Naive thymus-derived CD4-positive, alpha-beta T cell (primary cell): ENCODE measurements at regions of chr19 and their contacts with region 1.

Region 1: DNA sequence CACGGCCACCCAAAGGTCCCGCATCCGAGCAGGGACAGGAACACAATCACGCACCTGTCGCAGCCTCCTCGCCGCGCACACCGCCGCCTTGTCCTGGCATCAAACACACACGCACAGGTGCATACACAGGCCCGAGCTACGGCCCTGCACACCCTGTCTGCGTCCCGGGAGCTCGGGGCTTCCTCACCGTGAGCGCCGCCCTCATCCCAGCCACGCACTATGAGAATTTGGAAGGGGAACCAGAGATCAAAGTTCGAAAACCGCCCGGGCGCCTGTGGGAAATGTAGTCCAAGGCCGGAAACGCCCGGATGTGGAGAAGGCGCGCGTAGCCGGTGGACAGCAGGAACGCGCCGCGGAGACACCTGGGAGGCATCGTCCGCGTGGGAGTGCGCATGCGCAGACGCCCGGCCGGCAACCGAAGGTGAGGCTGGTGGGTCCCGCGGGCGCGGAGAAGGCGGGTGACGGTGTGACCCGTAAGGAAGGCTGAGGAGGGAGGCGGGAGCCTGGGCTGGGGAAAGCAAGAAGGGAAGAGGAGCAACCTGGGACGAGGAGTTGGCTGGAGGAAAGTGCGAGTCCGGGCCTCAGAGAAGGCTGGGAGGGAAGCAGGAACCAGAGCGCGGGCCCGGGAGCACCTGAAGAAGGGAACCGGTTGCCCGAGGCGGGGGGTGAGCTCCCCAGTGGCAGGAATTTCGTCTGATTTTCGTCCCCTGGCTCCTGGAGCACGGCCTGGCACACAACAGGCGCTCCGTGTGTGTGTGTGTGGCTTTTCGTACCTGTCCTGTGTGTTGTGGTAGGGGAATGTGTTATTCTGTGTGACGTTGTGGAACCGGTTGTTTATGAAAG is at the start of gene ZNF567:
- DNase-seq: peak; percentile 90 to 99 (median 93)
- ATAC-seq: peak; percentile 97
- H3K4me3 ChIP-seq: peak within 1 kb of the TSS; percentile 85
- H3K4me3 Mint-ChIP-seq: peak within 1 kb of the TSS; percentile 94 to 100 (median 98)
- H3K27ac ChIP-seq: peak within 1 kb of the TSS; percentile 86
- H3K27ac Mint-ChIP-seq: peak within 1 kb of the TSS; percentile 92 to 97 (median 95)
- H3K4me1 ChIP-seq: peaks cover 13 to 22% of the 10 kb centered on the region in 2 donors
- H3K4me1 Mint-ChIP-seq: peaks cover 26 to 49% (median 40%) of the 10 kb centered on the region in 7 donors
- H3K27me3 ChIP-seq: no peaks in the 10 kb centered on the region
- H3K27me3 Mint-ChIP-seq: peaks cover 0 to 5% (median 0%) of the 10 kb centered on the region in 5 donors
- total RNA-seq, gene ZNF567: 7.0 to 18.3 (median 9.3) TPM

Region 2: DNA sequence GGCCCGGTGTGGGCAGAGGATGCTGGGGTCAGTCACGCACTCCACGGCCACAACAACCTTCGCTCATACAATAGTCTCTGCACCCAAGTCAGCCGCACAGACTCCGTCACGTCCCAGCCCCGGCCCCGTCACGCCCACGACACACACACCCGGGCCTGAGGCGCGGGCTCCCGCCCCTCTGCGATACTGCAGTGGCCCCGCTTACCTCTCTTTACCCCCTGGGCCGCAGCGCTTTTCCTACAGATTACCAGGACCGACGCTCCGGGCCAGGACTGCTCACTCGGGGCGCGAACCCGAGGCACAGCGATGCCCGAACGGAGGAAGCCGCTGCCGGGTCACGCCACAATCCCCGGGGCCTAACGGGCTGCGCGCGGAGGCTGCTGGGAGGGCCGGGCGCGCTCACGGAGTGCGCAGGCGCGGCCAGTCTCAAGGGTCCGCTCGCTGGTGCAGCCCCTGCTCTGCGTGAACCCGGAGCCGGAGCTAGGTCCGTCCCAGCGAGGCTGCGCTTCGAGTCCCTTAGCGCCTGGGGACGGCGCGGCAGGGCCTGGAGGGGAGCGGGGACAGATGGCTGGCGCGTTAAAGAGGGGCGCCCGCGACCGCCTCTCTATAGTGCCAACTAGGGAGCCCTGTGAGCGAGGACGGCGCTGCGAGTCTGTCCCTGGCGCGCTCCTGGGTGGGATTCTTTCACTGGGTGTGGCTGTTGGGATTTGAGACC is 269.0 kb before region 1 on chr19 and contains the start of gene ZFP82:
- CTCF ChIA-PET with region 1: no interaction called
- POLR2A ChIA-PET with region 1: no interaction called
- intact Hi-C with region 1: loop called in 1 of 2 experiments (anchors 1 kb)
- DNase-seq: peak; percentile 47 to 83 (median 76)
- ATAC-seq: peak; percentile 94
- H3K4me3 ChIP-seq: peak within 1 kb of the TSS; percentile 82
- H3K4me3 Mint-ChIP-seq: peak within 1 kb of the TSS; percentile 89 to 96 (median 93)
- H3K27ac ChIP-seq: peak within 1 kb of the TSS; percentile 83
- H3K27ac Mint-ChIP-seq: peak within 1 kb of the TSS; percentile 82 to 95 (median 91)
- H3K4me1 ChIP-seq: peaks cover 6 to 13% of the 10 kb centered on the region in 2 donors
- H3K4me1 Mint-ChIP-seq: peaks cover 10 to 36% (median 21%) of the 10 kb centered on the region in 7 donors
- H3K27me3 ChIP-seq: peaks cover 0 to 9% of the 10 kb centered on the region in 2 donors
- H3K27me3 Mint-ChIP-seq: peaks cover 14 to 23% (median 22%) of the 10 kb centered on the region in 5 donors
- total RNA-seq, gene ZFP82: 2.2 to 8.2 (median 5.7) TPM

Region 3: GRCh38 chr19:36605101-36605876 is 82.1 kb before region 1 on chr19 and contains the start of gene ZNF382:
- CTCF ChIA-PET with region 1: no interaction called
- POLR2A ChIA-PET with region 1: interaction called, 4 read pairs
- intact Hi-C with region 1: loop called (anchors 1 kb)
- DNase-seq: peak; percentile 77 to 92 (median 86)
- ATAC-seq: peak; percentile 80
- H3K4me3 ChIP-seq: peak within 1 kb of the TSS; percentile 95
- H3K4me3 Mint-ChIP-seq: peak within 1 kb of the TSS; percentile 81 to 99 (median 93)
- H3K27ac ChIP-seq: peak within 1 kb of the TSS; percentile 84
- H3K27ac Mint-ChIP-seq: peak within 1 kb of the TSS; percentile 78 to 98 (median 93)
- H3K4me1 ChIP-seq: peaks cover 7 to 15% of the 10 kb centered on the region in 2 donors
- H3K4me1 Mint-ChIP-seq: peaks cover 20 to 32% (median 27%) of the 10 kb centered on the region in 7 donors
- H3K27me3 ChIP-seq: no peaks in the 10 kb centered on the region
- H3K27me3 Mint-ChIP-seq: no peaks in the 10 kb centered on the region
- total RNA-seq, gene ZNF382: 5.4 to 20.2 (median 12.2) TPM

Region 4: DNA sequence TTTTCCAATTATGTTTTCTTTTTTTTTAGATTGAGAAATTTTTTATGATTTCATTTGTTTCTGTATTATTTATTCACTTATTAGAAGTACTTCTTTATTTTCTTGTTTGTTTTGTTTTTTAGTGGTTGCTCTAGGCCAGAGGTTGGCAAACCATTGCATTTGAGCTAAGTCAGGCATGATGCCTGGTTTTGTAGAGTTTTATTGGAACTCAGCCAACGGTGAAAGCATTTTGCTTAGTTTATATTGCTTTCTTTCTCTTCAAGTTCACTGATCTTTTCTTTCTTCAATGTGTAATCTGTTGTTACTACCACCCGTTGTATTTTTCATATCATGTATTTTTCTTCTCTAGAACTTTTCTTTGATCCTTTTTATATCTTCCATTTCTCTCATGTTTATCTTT is 19.7 kb after region 1 on chr19:
- CTCF ChIA-PET with region 1: no interaction called
- POLR2A ChIA-PET with region 1: no interaction called
- intact Hi-C with region 1: no loop called
- DNase-seq: no peak
- ATAC-seq: no peak
- H3K4me3 ChIP-seq: no peak overlapping the region
- H3K4me3 Mint-ChIP-seq: no peak overlapping the region
- H3K27ac ChIP-seq: no peak overlapping the region
- H3K27ac Mint-ChIP-seq: no peak overlapping the region
- H3K4me1 ChIP-seq: no peaks in the 10 kb centered on the region
- H3K4me1 Mint-ChIP-seq: peaks cover 0 to 4% (median 0%) of the 10 kb centered on the region in 7 donors
- H3K27me3 ChIP-seq: no peaks in the 10 kb centered on the region
- H3K27me3 Mint-ChIP-seq: no peaks in the 10 kb centered on the region

Region 5: GRCh38 chr19:36850559-36851442 is 163.4 kb after region 1 on chr19 and contains the start of gene ZNF345:
- CTCF ChIA-PET with region 1: no interaction called
- POLR2A ChIA-PET with region 1: interaction called, 9 read pairs
- intact Hi-C with region 1: loop called (anchors 1 to 2 kb)
- DNase-seq: peak; percentile 62 to 91 (median 88)
- ATAC-seq: peak; percentile 93
- H3K4me3 ChIP-seq: peak within 1 kb of the TSS; percentile 92
- H3K4me3 Mint-ChIP-seq: no peak within 1 kb of the TSS
- H3K27ac ChIP-seq: peak within 1 kb of the TSS; percentile 86
- H3K27ac Mint-ChIP-seq: no peak within 1 kb of the TSS
- H3K4me1 ChIP-seq: peaks cover 9 to 16% of the 10 kb centered on the region in 2 donors
- H3K4me1 Mint-ChIP-seq: peaks cover 0 to 22% (median 13%) of the 10 kb centered on the region in 7 donors
- H3K27me3 ChIP-seq: no peaks in the 10 kb centered on the region
- H3K27me3 Mint-ChIP-seq: no peaks in the 10 kb centered on the region
- total RNA-seq, gene ZNF345: 6.8 to 18.2 (median 7.8) TPM

Region 6: DNA sequence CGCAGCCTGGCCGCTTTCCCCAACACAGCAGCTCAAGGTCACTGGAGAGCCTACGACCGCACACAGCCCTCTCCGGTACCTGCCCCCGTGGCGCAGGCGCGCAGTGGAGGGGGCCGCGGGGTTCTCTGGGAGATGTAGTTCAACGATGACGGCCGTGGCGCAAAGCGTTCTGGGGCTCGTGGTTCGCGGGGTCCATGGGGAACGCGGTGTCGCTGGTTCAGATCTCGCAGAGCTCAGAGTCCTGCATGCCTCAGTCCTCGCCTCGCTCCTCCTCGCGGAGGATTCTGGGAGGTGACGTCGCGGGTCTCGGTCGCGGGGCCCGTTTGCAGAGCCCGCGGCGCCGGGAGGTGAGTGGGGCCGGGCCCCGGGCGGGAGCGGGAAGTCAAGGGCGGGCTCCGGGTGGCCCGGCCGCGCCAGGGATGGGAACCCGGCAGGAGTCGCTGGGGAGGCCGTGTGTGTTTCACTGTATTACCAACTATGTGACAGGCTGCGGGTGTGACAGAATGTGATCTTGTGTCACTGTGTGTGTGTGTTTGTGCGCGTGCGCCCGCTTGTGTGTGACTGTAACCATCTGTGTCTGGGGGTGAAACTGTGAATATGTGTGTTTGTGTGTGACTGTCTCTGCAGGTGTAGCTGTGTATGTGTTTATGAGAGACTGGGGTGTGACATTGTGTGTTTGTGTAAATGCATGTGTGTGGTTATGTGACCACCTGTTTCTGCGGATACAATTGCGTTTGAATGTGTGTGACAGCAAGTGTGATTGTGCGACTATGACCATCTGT is 683.6 kb after region 1 on chr19 and contains the start of gene ZNF527:
- CTCF ChIA-PET with region 1: no interaction called
- POLR2A ChIA-PET with region 1: no interaction called
- intact Hi-C with region 1: loop called in 1 of 2 experiments (anchors 1 kb)
- DNase-seq: peak; percentile 92 to 97 (median 96)
- ATAC-seq: peak; percentile 96
- H3K4me3 ChIP-seq: peak within 1 kb of the TSS; percentile 85
- H3K4me3 Mint-ChIP-seq: peak within 1 kb of the TSS; percentile 92 to 100 (median 98)
- H3K27ac ChIP-seq: peak within 1 kb of the TSS; percentile 74
- H3K27ac Mint-ChIP-seq: peak within 1 kb of the TSS; percentile 87 to 99 (median 97)
- H3K4me1 ChIP-seq: peaks cover 0 to 8% of the 10 kb centered on the region in 2 donors
- H3K4me1 Mint-ChIP-seq: peaks cover 7 to 25% (median 17%) of the 10 kb centered on the region in 7 donors
- H3K27me3 ChIP-seq: no peaks in the 10 kb centered on the region
- H3K27me3 Mint-ChIP-seq: no peaks in the 10 kb centered on the region
- total RNA-seq, gene ZNF527: 5.6 to 13.6 (median 13.2) TPM

Region 7: GRCh38 chr19:37779127-37780005 is 1091.9 kb after region 1 on chr19 and contains the start of gene ZNF573:
- CTCF ChIA-PET with region 1: no interaction called
- POLR2A ChIA-PET with region 1: no interaction called
- intact Hi-C with region 1: loop called in 1 of 2 experiments (anchors 1 kb)
- DNase-seq: peak; percentile 62 to 99 (median 94)
- ATAC-seq: peak; percentile 94
- H3K4me3 ChIP-seq: peak within 1 kb of the TSS; percentile 82
- H3K4me3 Mint-ChIP-seq: peak within 1 kb of the TSS; percentile 91 to 98 (median 96)
- H3K27ac ChIP-seq: peak within 1 kb of the TSS; percentile 99
- H3K27ac Mint-ChIP-seq: peak within 1 kb of the TSS; percentile 89 to 100 (median 98)
- H3K4me1 ChIP-seq: peaks cover 6% of the 10 kb centered on the region in 2 donors
- H3K4me1 Mint-ChIP-seq: peaks cover 9 to 53% (median 48%) of the 10 kb centered on the region in 7 donors
- H3K27me3 ChIP-seq: no peaks in the 10 kb centered on the region
- H3K27me3 Mint-ChIP-seq: no peaks in the 10 kb centered on the region
- total RNA-seq, gene ZNF573: 5.9 to 43.8 (median 16.6) TPM